ENCODE measurements at regions of chr18 and their contacts with region 1.

Region 1: DNA sequence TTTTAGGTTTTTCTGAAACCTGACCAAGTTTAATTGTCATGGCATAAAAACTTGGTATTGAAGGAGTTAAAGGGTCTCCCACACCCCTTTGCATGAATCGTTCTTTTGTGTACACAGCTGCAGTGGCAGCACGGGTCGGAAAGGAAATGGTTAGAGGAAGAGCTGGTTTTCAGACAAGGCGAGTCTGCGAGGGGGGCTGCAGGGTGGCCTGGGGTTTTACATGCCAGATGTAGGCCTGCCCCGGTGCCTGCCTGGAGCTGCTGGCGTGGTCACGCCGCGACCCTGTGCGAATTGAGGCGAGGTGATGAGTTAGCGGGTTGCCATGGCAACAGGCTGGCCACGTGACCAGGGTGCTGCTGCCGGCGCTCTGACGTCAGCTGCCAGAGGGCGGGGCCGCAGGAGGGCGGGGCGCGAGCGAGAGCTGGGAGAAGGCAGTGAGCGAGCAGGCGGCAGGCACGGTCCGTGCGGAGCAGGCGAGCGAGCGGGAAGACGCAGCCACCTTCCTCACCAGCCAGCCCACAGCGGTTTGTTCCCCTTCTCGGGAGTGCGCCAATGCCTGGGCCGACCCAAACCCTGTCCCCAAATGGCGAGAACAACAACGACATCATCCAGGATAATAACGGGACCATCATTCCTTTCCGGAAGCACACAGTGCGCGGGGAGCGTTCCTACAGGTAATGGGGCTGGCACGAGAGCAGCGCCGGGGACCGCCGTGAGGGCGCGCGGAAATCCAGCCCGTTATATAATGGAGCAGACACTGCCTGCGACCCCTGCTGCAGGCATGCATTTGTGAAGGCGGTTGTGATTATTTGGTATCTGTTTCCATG is at the start of gene MAPRE2:
- DNase-seq: peak; percentile 100
- ATAC-seq: peak; percentile 76
- H3K4me3 Mint-ChIP-seq: peak within 1 kb of the TSS; percentile 97
- H3K27ac Mint-ChIP-seq: peak within 1 kb of the TSS; percentile 98
- H3K4me1 Mint-ChIP-seq: peaks cover 57% of the 10 kb centered on the region
- H3K27me3 Mint-ChIP-seq: no peaks in the 10 kb centered on the region
- total RNA-seq, gene MAPRE2: 59.4 to 83.8 TPM

Region 2: DNA sequence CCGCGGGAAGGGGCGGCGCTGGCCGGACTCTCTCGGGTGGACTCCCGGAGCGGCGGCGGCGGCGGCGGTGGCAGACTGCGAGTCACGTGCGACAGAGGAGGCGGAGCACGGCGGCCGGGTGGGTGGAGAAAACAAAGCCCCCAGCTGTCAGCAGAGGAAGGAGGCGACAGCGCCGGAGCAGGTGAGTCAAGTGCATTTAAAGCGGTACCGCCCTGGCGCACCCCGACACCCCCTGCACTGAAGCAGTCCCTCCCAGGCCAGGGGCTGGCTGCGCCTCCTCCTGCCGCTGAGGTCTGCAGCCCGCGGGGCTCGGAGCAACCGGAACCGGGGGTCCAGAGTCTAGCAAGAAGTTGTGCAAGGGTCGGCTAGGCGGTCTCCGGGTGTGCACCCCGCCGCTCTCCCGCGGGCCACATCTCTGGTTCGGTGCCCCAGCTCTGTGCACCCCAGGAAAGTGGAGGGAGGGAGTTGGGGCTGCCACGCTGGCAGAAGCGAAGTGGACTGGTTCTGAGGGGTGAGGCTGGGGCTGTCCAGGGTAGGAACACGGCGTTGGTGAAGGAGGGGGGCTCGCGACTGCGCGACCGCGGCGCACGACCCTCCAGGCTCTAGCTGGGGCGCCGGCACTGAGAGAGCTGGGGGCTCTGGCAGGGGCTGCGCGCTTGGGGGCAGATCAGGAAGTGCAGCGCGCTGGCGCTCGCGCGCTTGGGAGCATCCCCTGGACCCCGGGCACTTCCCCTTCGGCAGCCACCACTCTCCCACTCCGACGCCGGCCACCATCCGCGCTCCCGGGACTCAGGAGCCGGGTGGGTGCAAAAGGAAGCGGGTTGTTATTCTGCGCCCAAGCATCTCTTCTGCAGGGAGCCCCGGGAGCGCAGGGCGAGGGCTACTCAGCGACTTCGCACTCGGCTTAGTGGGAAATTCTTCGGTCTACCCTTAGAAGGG is 64.0 kb before region 1 on chr18:
- CTCF ChIA-PET with region 1: no interaction called
- POLR2A ChIA-PET with region 1: interaction called, 7 read pairs
- intact Hi-C with region 1: loop called (anchors 1 to 2 kb)
- DNase-seq: peak; percentile 85
- ATAC-seq: peak; percentile 55
- H3K4me3 Mint-ChIP-seq: peak overlapping the region; percentile 73
- H3K27ac Mint-ChIP-seq: no peak overlapping the region
- H3K4me1 Mint-ChIP-seq: peaks cover 23% of the 10 kb centered on the region
- H3K27me3 Mint-ChIP-seq: peaks cover 32% of the 10 kb centered on the region

Region 3: DNA sequence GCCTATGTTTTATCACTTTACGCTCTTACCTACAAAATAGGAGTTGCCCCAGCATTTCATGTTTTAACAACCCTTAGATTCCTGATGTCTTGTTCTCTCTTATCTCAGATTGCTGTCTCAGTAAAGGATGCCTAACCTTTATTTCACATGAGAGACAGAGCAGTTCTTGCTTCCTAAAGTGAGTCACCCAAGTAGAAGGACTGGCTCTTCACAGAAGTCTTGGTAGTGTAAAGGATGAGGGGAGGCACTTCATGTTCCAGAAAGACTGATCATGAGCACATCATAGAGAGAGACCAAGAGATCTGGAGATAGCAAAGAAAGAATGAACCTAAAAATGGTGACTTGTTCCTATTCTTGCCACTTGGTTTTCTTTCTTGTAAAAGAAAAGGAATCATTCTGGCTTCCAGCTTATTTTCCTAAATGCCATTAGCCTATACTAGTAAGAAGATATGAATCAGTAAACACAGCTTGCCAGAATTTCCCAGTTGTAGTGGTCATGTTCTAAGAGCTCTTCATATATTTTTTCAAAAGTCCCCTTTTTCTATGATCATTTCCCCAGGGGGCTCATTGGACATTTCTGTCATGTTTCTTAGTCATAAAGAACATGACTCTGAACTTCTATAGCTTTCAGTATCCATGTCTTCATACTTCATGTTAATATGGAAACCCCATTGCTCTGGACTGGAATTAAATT is 54.9 kb after region 1 on chr18:
- CTCF ChIA-PET with region 1: interaction called, 5 read pairs
- POLR2A ChIA-PET with region 1: interaction called, 3 read pairs
- intact Hi-C with region 1: loop called in 1 of 2 experiments (anchors 2 kb)
- DNase-seq: no peak
- ATAC-seq: peak; percentile 89
- H3K4me3 Mint-ChIP-seq: no peak overlapping the region
- H3K27ac Mint-ChIP-seq: peak overlapping the region; percentile 80
- H3K4me1 Mint-ChIP-seq: peaks cover 31% of the 10 kb centered on the region
- H3K27me3 Mint-ChIP-seq: no peaks in the 10 kb centered on the region

Region 4: GRCh38 chr18:35189510-35189909 is 148.3 kb after region 1 on chr18:
- CTCF ChIA-PET with region 1: no interaction called
- POLR2A ChIA-PET with region 1: no interaction called
- intact Hi-C with region 1: no loop called
- DNase-seq: no peak
- ATAC-seq: no peak
- H3K4me3 Mint-ChIP-seq: no peak overlapping the region
- H3K27ac Mint-ChIP-seq: no peak overlapping the region
- H3K4me1 Mint-ChIP-seq: no peaks in the 10 kb centered on the region
- H3K27me3 Mint-ChIP-seq: no peaks in the 10 kb centered on the region

Region 5: DNA sequence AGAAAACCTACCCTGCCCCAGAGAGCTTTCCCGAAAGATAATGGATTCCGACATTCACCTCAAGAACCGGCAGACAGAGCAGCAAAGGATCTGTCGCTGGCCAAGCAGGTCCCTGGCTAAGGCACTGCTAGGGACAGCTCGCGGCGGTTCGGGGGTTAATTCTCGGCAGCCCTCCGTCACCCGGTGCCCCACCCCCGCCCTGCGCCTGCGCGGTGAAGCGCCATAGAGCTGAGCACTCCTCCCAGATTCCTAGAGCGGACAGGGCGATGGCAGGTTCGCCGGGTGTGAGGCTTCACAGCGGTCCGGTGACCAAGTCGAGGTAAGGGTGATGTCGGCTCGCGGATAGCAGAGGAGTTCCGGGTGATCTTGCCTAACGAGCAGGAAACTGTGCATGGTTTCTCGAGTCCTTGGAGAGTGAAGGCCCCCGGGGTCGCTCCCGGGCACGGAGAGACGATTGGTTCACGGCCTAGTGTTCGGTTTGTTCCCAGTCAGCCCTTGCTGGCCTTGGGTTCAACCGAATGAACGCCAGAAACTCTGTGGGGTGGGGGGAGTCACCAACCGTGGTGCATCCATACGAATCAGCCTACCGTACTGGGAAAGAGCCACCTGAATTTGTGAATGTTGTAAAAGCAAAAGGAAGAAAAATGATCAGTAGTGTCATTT is 249.0 kb after region 1 on chr18 and contains the start of gene ZSCAN30:
- CTCF ChIA-PET with region 1: no interaction called
- POLR2A ChIA-PET with region 1: no interaction called
- intact Hi-C with region 1: loop called in 1 of 2 experiments (anchors 2 kb)
- DNase-seq: peak; percentile 97
- ATAC-seq: peak; percentile 97
- H3K4me3 Mint-ChIP-seq: peak within 1 kb of the TSS; percentile 96
- H3K27ac Mint-ChIP-seq: peak within 1 kb of the TSS; percentile 96
- H3K4me1 Mint-ChIP-seq: peaks cover 45% of the 10 kb centered on the region
- H3K27me3 Mint-ChIP-seq: no peaks in the 10 kb centered on the region
- total RNA-seq, gene ZSCAN30: 24.2 to 25.4 TPM

Region 6: GRCh38 chr18:35616664-35617423 is 575.6 kb after region 1 on chr18:
- CTCF ChIA-PET with region 1: interaction called, 3 read pairs
- POLR2A ChIA-PET with region 1: no interaction called
- intact Hi-C with region 1: loop called in 1 of 2 experiments (anchors 5 kb)
- DNase-seq: peak; percentile 81
- ATAC-seq: peak; percentile 94
- H3K4me3 Mint-ChIP-seq: no peak overlapping the region
- H3K27ac Mint-ChIP-seq: no peak overlapping the region
- H3K4me1 Mint-ChIP-seq: peaks cover 16% of the 10 kb centered on the region
- H3K27me3 Mint-ChIP-seq: no peaks in the 10 kb centered on the region

Region 7: DNA sequence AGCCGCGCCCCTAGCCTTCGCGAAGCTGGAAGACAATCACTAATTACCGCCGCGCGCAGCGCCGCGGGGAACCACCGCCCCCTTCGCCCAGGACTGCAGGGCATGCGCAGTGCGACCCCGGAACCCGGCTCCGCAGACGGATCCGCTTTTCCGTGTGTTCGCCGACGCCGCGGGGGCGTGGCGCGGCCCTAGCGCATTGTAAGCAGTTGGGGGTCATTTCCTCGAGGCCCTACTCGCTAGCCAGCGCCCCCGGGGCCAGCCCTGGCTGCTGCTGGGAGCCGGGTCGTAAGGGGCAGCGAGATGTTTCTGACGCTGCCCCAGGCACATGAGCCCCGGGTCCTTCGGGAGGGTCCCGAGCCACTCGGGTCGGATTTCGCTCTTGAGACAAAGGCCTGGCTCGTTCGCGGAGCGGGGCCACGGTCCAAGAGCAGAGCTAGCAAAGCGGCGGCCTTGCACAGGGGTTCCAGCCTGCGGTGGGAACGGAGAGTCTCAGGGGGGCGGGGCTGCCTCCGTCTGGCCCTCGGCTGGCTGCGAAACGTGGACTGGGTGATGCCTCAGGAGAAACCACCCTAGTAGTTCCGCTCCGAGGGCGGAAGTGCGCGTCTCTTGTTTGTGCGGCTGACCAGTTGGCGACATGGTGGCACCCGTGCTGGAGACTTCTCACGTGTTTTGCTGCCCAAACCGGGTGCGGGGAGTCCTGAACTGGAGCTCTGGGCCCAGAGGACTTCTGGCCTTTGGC is 1088.3 kb after region 1 on chr18 and contains the starts of genes ELP2 and SLC39A6:
- CTCF ChIA-PET with region 1: no interaction called
- POLR2A ChIA-PET with region 1: no interaction called
- intact Hi-C with region 1: loop called in 1 of 2 experiments (anchors 2 kb)
- DNase-seq: peak; percentile 97
- ATAC-seq: peak; percentile 94
- H3K4me3 Mint-ChIP-seq: peak within 1 kb of the TSS; percentile 92
- H3K27ac Mint-ChIP-seq: peak within 1 kb of the TSS; percentile 95
- H3K4me1 Mint-ChIP-seq: peaks cover 57% of the 10 kb centered on the region
- H3K27me3 Mint-ChIP-seq: no peaks in the 10 kb centered on the region
- total RNA-seq, gene ELP2: 76.5 to 114 TPM
- total RNA-seq, gene SLC39A6: 23.9 to 28.6 TPM